ENCODE measurements at regions of chr1 and their contacts with region 1.

Region 1: DNA sequence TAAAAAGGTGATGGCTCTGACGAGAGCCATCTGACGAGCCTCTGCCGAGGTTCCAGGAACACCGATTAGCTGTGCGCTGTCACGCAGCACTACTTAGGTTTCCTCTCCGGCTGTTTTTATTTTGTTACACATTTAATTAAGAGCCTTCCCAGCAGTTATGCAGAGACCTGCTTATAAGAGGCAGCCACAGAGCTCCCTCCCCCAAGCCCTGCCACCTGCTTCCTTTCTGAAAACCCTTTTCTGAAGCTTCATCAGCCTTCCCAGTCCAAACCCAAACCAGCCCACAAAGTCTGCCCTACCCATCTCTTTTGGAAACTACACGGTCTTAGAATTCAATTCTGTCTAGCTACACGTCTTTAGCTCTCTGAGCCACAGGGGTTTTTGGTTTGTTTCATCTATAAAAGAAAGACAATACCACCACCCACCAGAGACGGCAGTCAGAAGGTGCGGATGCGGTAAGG is 49.1 kb downstream of the ERI3 start:
- DNase-seq: peak in 7 of 14 experiments; percentile 1 to 58 (median 12)
- ATAC-seq: peak; percentile 92
- H3K4me3 ChIP-seq: no peak overlapping the region
- H3K4me3 Mint-ChIP-seq: peak overlapping the region; percentile 23
- H3K27ac ChIP-seq: no peak overlapping the region
- H3K27ac Mint-ChIP-seq: peak overlapping the region; percentile 78
- H3K4me1 ChIP-seq: peaks cover 13% of the 10 kb centered on the region
- H3K4me1 Mint-ChIP-seq: peaks cover 43% of the 10 kb centered on the region
- H3K27me3 ChIP-seq: no peaks in the 10 kb centered on the region
- H3K27me3 Mint-ChIP-seq: no peaks in the 10 kb centered on the region
- CTCF ChIP-seq: no peak

Region 2: GRCh38 chr1:44318097-44319088 is 12.4 kb after region 1 on chr1:
- CTCF ChIA-PET with region 1: no interaction called
- POLR2A ChIA-PET with region 1: no interaction called
- intact Hi-C with region 1: loop called in 1 of 2 experiments (anchors 1 kb)
- DNase-seq: peak in 12 of 14 experiments; percentile 9 to 76 (median 22)
- ATAC-seq: peak; percentile 41
- H3K4me3 ChIP-seq: no peak overlapping the region
- H3K4me3 Mint-ChIP-seq: no peak overlapping the region
- H3K27ac ChIP-seq: no peak overlapping the region
- H3K27ac Mint-ChIP-seq: no peak overlapping the region
- H3K4me1 ChIP-seq: peaks cover 3% of the 10 kb centered on the region
- H3K4me1 Mint-ChIP-seq: peaks cover 6% of the 10 kb centered on the region
- H3K27me3 ChIP-seq: no peaks in the 10 kb centered on the region
- H3K27me3 Mint-ChIP-seq: no peaks in the 10 kb centered on the region
- CTCF ChIP-seq: peak; percentile 91